Posterior vena cava (tissue), 2 donors: ENCODE measurements at regions of chr16 and their contacts with region 1.

Region 1: GRCh38 chr16:21001262-21001661 is 100.7 kb downstream of the LYRM1 start:
- DNase-seq: no peak

Region 2: GRCh38 chr16:20987049-20987448 is 14.2 kb before region 1 on chr16:
- intact Hi-C with region 1: loop called in 1 of 2 experiments (anchors 1 kb)
- DNase-seq: no peak